PC-9 (cell line): ENCODE measurements at regions of chr6 and their contacts with region 1.

Region 1: DNA sequence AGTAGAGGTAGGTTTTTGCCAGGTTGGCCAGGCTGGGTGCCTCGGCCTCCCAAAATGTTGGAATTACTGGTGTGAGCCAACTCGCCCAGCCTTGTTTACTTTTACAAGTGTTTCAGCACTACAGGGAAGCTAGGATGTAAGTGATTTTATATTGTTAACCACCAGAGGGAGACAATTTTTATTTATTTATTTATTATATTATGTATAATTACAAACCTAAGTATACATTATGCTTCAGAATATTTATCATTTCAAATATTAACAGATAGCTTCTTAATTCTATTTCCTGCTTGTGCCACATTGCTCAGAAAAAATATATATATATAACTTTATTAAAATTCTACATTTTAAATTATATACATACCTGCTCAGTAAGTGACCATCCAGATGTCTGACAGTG is 9.8 kb downstream of the MMUT start:
- DNase-seq: no peak
- H3K4me3 ChIP-seq: no peak overlapping the region
- H3K27ac ChIP-seq: no peak overlapping the region
- H3K4me1 ChIP-seq: no peaks in the 10 kb centered on the region
- H3K27me3 ChIP-seq: no peaks in the 10 kb centered on the region
- CTCF ChIP-seq: peak; percentile 68

Region 2: DNA sequence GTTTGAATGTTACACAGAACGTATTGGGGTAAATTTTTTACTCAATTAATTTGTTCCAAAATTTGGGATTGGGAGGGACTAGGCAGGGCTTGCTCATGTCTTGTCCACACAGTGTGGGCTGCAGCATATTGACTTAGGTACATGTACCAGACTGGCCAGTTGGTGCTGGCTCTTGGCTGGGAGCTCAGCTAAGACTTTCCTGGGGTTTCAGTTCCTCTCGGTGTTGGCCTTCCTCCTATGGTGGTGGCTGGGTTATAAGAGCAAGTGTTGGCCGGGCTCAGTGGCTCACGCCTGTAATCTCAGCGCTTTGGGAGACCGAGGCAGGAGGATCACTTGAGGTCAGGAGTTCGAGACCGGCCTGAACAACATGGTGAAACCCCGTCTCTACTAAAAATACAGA is 14.8 kb after region 1 on chr6:
- CTCF ChIA-PET with region 1: no interaction called
- POLR2A ChIA-PET with region 1: no interaction called
- intact Hi-C with region 1: no loop called
- DNase-seq: no peak
- H3K4me3 ChIP-seq: no peak overlapping the region
- H3K27ac ChIP-seq: no peak overlapping the region
- H3K4me1 ChIP-seq: peaks cover 9% of the 10 kb centered on the region
- H3K27me3 ChIP-seq: no peaks in the 10 kb centered on the region
- CTCF ChIP-seq: no peak

Region 3: GRCh38 chr6:49506569-49507111 is 53.4 kb after region 1 on chr6:
- CTCF ChIA-PET with region 1: no interaction called
- POLR2A ChIA-PET with region 1: no interaction called
- intact Hi-C with region 1: no loop called
- DNase-seq: no peak
- H3K4me3 ChIP-seq: no peak overlapping the region
- H3K27ac ChIP-seq: no peak overlapping the region
- H3K4me1 ChIP-seq: no peaks in the 10 kb centered on the region
- H3K27me3 ChIP-seq: no peaks in the 10 kb centered on the region
- CTCF ChIP-seq: no peak

Region 4: GRCh38 chr6:49849213-49849907 is 396.1 kb after region 1 on chr6:
- CTCF ChIA-PET with region 1: no interaction called
- POLR2A ChIA-PET with region 1: no interaction called
- intact Hi-C with region 1: loop called (anchors 1 kb)
- DNase-seq: peak; percentile 5 to 43
- H3K4me3 ChIP-seq: no peak overlapping the region
- H3K27ac ChIP-seq: no peak overlapping the region
- H3K4me1 ChIP-seq: no peaks in the 10 kb centered on the region
- H3K27me3 ChIP-seq: no peaks in the 10 kb centered on the region
- CTCF ChIP-seq: peak; percentile 83

Region 5: GRCh38 chr6:50030777-50031562 is 577.7 kb after region 1 on chr6:
- CTCF ChIA-PET with region 1: no interaction called
- POLR2A ChIA-PET with region 1: no interaction called
- intact Hi-C with region 1: loop called (anchors 5 kb)
- DNase-seq: peak in 1 of 2 experiments; percentile 25
- H3K4me3 ChIP-seq: no peak overlapping the region
- H3K27ac ChIP-seq: no peak overlapping the region
- H3K4me1 ChIP-seq: no peaks in the 10 kb centered on the region
- H3K27me3 ChIP-seq: no peaks in the 10 kb centered on the region
- CTCF ChIP-seq: peak; percentile 58